PC-9 (cell line): ENCODE measurements at regions of chr22 and their contacts with region 1.

Region 1: GRCh38 chr22:45435544-45436139 is 22.1 kb downstream of the RIBC2 start:
- DNase-seq: peak; percentile 82 to 87
- H3K4me3 ChIP-seq: no peak overlapping the region
- H3K27ac ChIP-seq: no peak overlapping the region
- H3K4me1 ChIP-seq: peaks cover 12% of the 10 kb centered on the region
- H3K27me3 ChIP-seq: no peaks in the 10 kb centered on the region
- CTCF ChIP-seq: peak; percentile 97

Region 2: GRCh38 chr22:44955102-44955501 is 480.5 kb before region 1 on chr22:
- CTCF ChIA-PET with region 1: no interaction called
- POLR2A ChIA-PET with region 1: no interaction called
- intact Hi-C with region 1: no loop called
- DNase-seq: no peak
- H3K4me3 ChIP-seq: no peak overlapping the region
- H3K27ac ChIP-seq: no peak overlapping the region
- H3K4me1 ChIP-seq: no peaks in the 10 kb centered on the region
- H3K27me3 ChIP-seq: peaks cover 99% of the 10 kb centered on the region
- CTCF ChIP-seq: no peak

Region 3: DNA sequence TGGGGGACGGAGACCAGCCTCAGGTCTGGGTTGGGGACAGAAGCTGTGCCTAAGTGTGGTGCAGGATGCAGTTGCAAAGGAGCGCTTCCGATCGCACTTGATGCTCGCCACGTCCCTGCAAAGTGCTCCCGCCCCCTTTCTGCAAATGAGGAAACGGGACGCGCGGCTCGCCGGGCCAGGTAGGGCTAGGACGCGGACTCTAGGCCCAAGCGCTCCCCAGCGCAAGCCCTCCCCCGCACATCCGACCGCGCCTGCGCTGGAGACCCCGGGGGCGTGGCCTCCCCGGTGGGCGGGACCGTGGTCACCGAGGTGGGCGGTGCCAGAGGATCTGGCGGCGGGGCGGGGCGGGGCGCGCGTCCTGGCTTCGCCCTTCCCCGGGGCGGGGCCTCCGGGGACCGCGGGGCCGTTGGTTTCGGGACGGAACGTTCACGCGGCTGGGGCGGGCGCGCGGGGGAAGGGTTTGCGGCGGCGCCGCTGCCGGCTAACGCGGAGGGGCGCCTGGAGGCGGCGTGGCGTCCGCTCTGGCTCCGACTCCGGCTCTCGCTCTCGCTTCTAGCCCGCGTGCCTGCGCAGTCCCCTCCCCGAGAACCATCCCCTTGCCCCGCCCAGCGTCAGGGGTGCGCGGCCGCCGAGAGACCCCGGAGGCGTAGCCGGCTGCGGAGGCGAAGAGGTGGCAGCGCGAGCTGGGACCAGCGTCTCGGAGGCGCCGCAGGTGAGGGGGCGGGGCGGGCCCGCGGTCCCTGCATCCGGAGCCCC is 126.0 kb before region 1 on chr22 and contains the start of gene FAM118A:
- CTCF ChIA-PET with region 1: no interaction called
- POLR2A ChIA-PET with region 1: no interaction called
- intact Hi-C with region 1: loop called (anchors 10 kb)
- DNase-seq: peak; percentile 82 to 99
- H3K4me3 ChIP-seq: peak within 1 kb of the TSS; percentile 94
- H3K27ac ChIP-seq: peak within 1 kb of the TSS; percentile 38; the same call in 1 of the 2 replicates
- H3K4me1 ChIP-seq: peaks cover 34% of the 10 kb centered on the region
- H3K27me3 ChIP-seq: no peaks in the 10 kb centered on the region
- CTCF ChIP-seq: no peak
- total RNA-seq, gene FAM118A: 24.4 and 35.4 TPM in 2 replicates

Region 4: GRCh38 chr22:46748908-46749675 is 1313.5 kb after region 1 on chr22:
- CTCF ChIA-PET with region 1: no interaction called
- POLR2A ChIA-PET with region 1: no interaction called
- intact Hi-C with region 1: no loop called
- DNase-seq: peak; percentile 83 to 99
- H3K4me3 ChIP-seq: peak overlapping the region; percentile 36; the same call in 1 of the 2 replicates
- H3K27ac ChIP-seq: peak overlapping the region; percentile 79
- H3K4me1 ChIP-seq: peaks cover 66% of the 10 kb centered on the region
- H3K27me3 ChIP-seq: no peaks in the 10 kb centered on the region
- CTCF ChIP-seq: no peak